ENCODE measurements at regions of chr9 and their contacts with region 1.

Region 1: DNA sequence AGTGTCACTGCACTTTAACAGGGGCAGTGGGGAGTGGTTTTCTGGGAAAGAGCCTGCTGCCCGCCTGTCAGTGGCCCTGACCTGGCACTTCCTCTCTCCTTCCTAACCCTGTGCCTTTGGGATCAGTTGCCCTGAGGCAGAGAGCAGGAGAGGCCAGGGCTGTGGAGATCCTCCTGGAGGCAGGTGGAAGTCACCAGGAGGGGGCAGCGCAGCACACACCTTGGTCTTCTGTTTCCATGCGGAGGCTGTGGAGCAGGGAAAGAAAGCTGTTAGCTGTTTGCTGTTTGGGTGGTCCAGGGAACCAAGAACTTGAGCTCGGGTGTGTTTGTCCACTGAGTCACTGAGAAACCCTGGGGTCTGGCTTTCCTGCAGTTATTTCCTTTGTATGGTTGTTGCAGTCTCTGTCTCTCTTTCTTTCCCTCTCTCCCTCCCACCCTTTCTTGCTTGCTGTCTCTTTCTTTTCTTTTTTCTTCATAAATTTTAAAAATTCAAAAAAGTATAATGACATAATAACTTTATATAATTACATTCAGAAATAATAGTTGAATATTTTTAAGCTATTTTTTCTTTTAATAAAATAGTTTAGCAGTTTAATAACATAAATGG is 28.1 kb downstream of the NTRK2 start:
- DNase-seq: peak; percentile 52
- H3K4me3 ChIP-seq: no peak overlapping the region
- H3K27ac ChIP-seq: no peak overlapping the region
- H3K4me1 ChIP-seq: peaks cover 5% of the 10 kb centered on the region
- H3K27me3 ChIP-seq: peaks cover 0 to 2% of the 10 kb centered on the region in 2 experiments
- CTCF ChIP-seq: peak; percentile 66 to 82
- POLR2A ChIP-seq: no peak

Region 2: GRCh38 chr9:84686068-84686467 is 11.5 kb before region 1 on chr9:
- CTCF ChIA-PET with region 1: interaction called, 10 read pairs
- POLR2A ChIA-PET with region 1: no interaction called
- dilution Hi-C with region 1: no loop called
- intact Hi-C with region 1: no loop called
- DNase-seq: no peak
- H3K4me3 ChIP-seq: no peak overlapping the region
- H3K27ac ChIP-seq: no peak overlapping the region
- H3K4me1 ChIP-seq: no peaks in the 10 kb centered on the region
- H3K27me3 ChIP-seq: no peaks in the 10 kb centered on the region
- CTCF ChIP-seq: no peak
- POLR2A ChIP-seq: no peak

Region 3: DNA sequence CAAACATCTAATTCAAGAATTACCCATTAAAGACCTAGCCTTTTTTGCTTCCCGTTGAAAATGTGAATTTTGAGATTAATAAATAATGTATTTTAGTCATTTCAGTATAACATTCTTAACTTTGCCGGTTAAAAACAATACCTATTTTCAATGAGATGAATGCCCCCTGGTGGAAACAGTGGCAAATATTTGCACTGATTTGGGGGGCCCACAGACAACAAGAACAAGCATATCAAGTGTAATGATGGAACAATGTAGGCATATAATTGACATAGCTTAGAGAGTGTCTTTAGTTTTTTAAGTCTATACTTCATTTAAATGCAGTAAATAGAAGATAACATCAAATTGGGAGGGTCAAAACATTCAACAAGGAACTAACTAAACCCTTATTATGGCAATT is 83.8 kb after region 1 on chr9:
- CTCF ChIA-PET with region 1: interaction called, 18 read pairs
- POLR2A ChIA-PET with region 1: no interaction called
- dilution Hi-C with region 1: no loop called
- intact Hi-C with region 1: loop called (anchors 2 kb)
- DNase-seq: peak; percentile 33
- H3K4me3 ChIP-seq: no peak overlapping the region
- H3K27ac ChIP-seq: no peak overlapping the region
- H3K4me1 ChIP-seq: peaks cover 7% of the 10 kb centered on the region
- H3K27me3 ChIP-seq: no peaks in the 10 kb centered on the region
- CTCF ChIP-seq: peak; percentile 30
- POLR2A ChIP-seq: no peak

Region 4: GRCh38 chr9:84793251-84793650 is 95.6 kb after region 1 on chr9:
- CTCF ChIA-PET with region 1: no interaction called
- POLR2A ChIA-PET with region 1: no interaction called
- dilution Hi-C with region 1: no loop called
- intact Hi-C with region 1: no loop called
- DNase-seq: no peak
- H3K4me3 ChIP-seq: no peak overlapping the region
- H3K27ac ChIP-seq: no peak overlapping the region
- H3K4me1 ChIP-seq: no peaks in the 10 kb centered on the region
- H3K27me3 ChIP-seq: peaks cover 0 to 2% of the 10 kb centered on the region in 2 experiments
- CTCF ChIP-seq: no peak
- POLR2A ChIP-seq: no peak

Region 5: GRCh38 chr9:85142968-85143367 is 445.4 kb after region 1 on chr9:
- CTCF ChIA-PET with region 1: interaction called, 11 read pairs
- POLR2A ChIA-PET with region 1: no interaction called
- dilution Hi-C with region 1: no loop called
- intact Hi-C with region 1: no loop called
- DNase-seq: peak; percentile 9
- H3K4me3 ChIP-seq: no peak overlapping the region
- H3K27ac ChIP-seq: no peak overlapping the region
- H3K4me1 ChIP-seq: no peaks in the 10 kb centered on the region
- H3K27me3 ChIP-seq: peaks cover 0 to 3% of the 10 kb centered on the region in 2 experiments
- CTCF ChIP-seq: peak in 1 of 2 donors; percentile 45
- POLR2A ChIP-seq: no peak

Region 6: GRCh38 chr9:85425153-85425611 is 727.6 kb after region 1 on chr9:
- CTCF ChIA-PET with region 1: interaction called, 11 read pairs
- POLR2A ChIA-PET with region 1: no interaction called
- dilution Hi-C with region 1: no loop called
- intact Hi-C with region 1: loop called (anchors 1 kb)
- DNase-seq: peak; percentile 84
- H3K4me3 ChIP-seq: no peak overlapping the region
- H3K27ac ChIP-seq: no peak overlapping the region
- H3K4me1 ChIP-seq: peaks cover 26% of the 10 kb centered on the region
- H3K27me3 ChIP-seq: no peaks in the 10 kb centered on the region
- CTCF ChIP-seq: peak; percentile 74 to 78
- POLR2A ChIP-seq: no peak